ENCODE measurements at regions of chr10 and their contacts with region 1.

Region 1: GRCh38 chr10:110664483-110665420 is 20.6 kb downstream of the RBM20 start:
- DNase-seq: peak in 1 of 2 donors; percentile 70
- ATAC-seq: peak; percentile 33 to 68 (median 60)
- H3K4me3 ChIP-seq: peak overlapping the region; percentile 43
- H3K27ac ChIP-seq: peak overlapping the region; percentile 97
- H3K4me1 ChIP-seq: peaks cover 48% of the 10 kb centered on the region
- H3K27me3 ChIP-seq: no peaks in the 10 kb centered on the region
- CTCF ChIP-seq: no peak

Region 2: DNA sequence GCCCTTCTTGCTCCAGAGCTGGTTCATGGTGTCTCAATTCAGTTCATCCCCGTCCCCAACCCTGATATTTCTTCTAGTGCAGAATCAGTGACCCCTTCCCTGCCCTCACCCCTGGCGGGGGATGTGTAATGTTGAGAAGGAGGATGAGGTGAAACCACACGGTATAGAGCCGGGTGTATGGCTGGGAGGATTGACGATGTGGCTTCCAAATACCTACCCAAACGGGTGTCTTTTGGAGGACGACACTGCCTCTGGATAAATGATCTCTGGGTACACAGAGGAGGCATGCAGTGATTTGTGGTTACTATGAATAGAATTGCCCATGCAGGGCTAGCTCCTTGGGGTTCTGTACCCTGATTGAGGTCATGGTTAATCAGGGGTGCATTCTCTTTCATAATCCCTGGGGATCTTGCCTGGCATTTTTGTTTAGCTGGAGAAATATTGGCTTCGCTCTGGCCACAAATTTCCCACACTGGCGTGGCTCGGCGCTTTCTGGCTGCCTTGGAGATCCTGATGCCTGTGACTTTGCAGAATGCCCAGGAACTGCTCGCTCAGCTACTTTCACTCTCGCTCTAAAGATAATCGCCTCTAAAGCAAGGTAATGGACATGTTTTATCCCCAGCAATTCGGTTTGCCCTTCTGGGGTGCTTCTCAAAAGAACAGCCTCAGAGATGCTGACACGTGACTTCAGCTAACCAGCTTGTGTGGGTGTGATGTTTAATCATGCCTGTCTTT is 68.6 kb after region 1 on chr10:
- intact Hi-C with region 1: loop called in 1 of 2 experiments (anchors 5 kb)
- DNase-seq: peak in 1 of 2 donors; percentile 71
- ATAC-seq: peak; percentile 68 to 78 (median 76)
- H3K4me3 ChIP-seq: peak overlapping the region; percentile 62
- H3K27ac ChIP-seq: peak overlapping the region; percentile 94
- H3K4me1 ChIP-seq: peaks cover 28% of the 10 kb centered on the region
- H3K27me3 ChIP-seq: no peaks in the 10 kb centered on the region
- CTCF ChIP-seq: no peak

Measured in psoas muscle (tissue), 8 donors.